Left ventricle myocardium inferior (tissue), 1 donor: ENCODE measurements at regions of chr3 and their contacts with region 1.

Region 1: DNA sequence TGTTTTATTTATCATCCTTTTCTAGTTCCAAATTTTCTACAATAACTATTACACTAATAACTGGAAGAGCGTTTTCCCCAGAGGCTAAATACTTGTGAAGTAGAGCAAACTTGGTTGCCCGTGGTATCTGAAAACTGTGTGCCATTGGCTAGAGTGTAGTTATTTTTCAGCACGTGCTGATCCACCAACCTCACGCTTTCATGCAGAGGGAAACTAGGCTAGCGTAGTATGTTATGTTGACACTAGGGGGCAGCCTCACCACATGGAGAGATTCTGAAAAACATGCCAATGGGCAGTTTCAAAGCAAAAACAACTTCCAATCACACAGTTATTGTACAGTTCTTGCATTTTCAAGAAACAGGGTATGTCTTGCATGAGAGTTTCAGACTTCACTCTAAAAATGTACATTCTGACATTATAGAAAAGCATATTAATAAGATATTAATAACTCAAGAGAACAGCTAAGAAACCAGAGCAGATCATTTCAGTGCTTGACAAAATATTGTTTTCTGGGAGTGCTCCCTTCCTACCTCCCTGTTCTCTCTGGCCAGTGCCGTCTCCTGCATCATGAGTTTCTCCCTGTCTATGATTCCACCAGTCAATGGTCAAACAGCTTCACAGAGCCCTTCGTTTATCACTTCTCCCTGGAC is 39.7 kb downstream of the SPATA12 start:
- DNase-seq: no peak
- H3K4me3 ChIP-seq: no peak overlapping the region
- H3K27ac ChIP-seq: no peak overlapping the region
- H3K4me1 ChIP-seq: no peaks in the 10 kb centered on the region
- H3K27me3 ChIP-seq: no peaks in the 10 kb centered on the region
- CTCF ChIP-seq: peak; percentile 95

Region 2: GRCh38 chr3:56960234-56960917 is 139.8 kb before region 1 on chr3:
- intact Hi-C with region 1: no loop called
- DNase-seq: no peak
- H3K4me3 ChIP-seq: no peak overlapping the region
- H3K27ac ChIP-seq: no peak overlapping the region
- H3K4me1 ChIP-seq: no peaks in the 10 kb centered on the region
- H3K27me3 ChIP-seq: no peaks in the 10 kb centered on the region
- CTCF ChIP-seq: no peak

Region 3: DNA sequence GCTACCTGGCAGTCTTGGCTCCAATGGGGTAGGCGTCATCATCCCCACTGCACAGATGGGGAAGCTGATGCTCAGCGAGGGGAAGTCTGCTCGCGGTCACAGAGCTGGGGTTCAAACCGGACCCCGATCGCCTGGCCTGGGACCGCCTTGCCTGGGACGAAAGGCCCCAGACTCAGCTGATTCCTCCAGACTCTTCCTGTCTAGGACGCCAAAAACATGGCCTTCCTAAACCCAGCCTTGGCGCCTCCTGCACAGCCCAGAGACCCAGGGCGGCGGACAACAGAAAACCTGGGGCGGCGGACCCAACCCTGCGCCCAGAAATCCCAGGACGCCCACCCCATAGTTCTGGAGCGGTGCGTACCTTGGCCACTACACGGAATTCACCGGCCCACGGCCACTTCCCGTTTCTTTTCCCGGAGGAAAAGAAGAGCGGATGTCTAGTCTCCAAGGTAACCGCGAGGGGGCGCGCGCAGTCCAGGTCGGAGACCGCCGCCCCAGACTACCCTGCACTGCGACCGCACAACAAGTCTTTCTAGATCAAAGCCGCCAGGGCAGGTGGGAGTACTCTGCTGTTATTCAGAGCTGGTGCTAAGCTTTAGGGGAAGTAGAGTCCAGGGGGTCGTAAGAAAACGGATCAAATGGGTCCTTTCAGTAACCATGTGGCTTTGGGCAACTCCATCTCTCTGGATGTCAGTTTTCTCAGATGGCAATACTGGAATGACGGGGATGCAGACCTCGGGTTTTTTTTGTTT is 69.9 kb after region 1 on chr3:
- intact Hi-C with region 1: loop called (anchors 10 kb)
- DNase-seq: peak; percentile 75
- H3K4me3 ChIP-seq: peak overlapping the region; percentile 68
- H3K27ac ChIP-seq: no peak overlapping the region
- H3K4me1 ChIP-seq: peaks cover 16% of the 10 kb centered on the region
- H3K27me3 ChIP-seq: no peaks in the 10 kb centered on the region
- CTCF ChIP-seq: peak; percentile 92

Region 4: GRCh38 chr3:57221883-57222282 is 121.7 kb after region 1 on chr3:
- intact Hi-C with region 1: loop called (anchors 5 kb)
- DNase-seq: no peak
- H3K4me3 ChIP-seq: no peak overlapping the region
- H3K27ac ChIP-seq: no peak overlapping the region
- H3K4me1 ChIP-seq: peaks cover 5% of the 10 kb centered on the region
- H3K27me3 ChIP-seq: no peaks in the 10 kb centered on the region
- CTCF ChIP-seq: peak; percentile 46